Activated B cell treated with CpG ODN at 0.5 μM for 24 hours (primary cell): ENCODE measurements at regions of chr2 and their contacts with region 1.

Region 1: DNA sequence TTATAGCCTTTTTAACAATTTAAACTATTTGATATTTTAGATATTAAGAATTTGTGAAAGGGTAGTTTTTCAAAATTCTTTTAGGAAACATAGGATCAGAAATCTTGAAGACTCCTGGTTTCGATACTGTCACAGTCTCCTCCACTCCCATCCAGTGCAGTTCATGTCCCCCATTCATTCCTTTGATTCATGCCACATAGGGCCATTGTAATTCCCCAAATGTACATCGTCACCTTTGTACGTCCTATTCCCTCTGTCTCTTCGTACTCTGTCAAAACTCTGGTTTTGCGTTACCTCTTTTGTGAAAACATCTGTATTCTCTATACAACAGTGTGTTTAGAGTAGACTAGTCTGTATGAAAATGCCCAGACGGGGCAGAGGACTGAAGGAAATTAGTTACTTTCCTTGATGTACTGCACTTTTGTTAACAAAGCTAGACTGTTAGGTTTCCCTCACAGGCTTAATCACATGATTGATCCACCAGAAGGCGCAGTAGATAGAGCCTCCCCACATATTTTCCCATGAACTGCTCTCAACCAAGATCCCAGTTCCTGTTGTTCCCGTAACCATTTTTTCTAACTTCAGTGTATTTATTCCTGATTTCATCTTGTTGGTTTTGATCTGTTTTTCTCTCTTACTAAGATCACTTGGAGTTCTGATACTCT is 2.5 kb downstream of the MRPL35 start:
- DNase-seq: no peak
- ATAC-seq: no peak
- H3K4me3 Mint-ChIP-seq: no peak overlapping the region
- H3K27ac Mint-ChIP-seq: no peak overlapping the region
- H3K4me1 Mint-ChIP-seq: peaks cover 38% of the 10 kb centered on the region
- H3K27me3 Mint-ChIP-seq: no peaks in the 10 kb centered on the region
- CTCF ChIP-seq: no peak

Region 2: GRCh38 chr2:86038291-86039081 is 163.3 kb before region 1 on chr2:
- CTCF ChIA-PET with region 1: no interaction called
- POLR2A ChIA-PET with region 1: no interaction called
- intact Hi-C with region 1: no loop called
- DNase-seq: no peak
- ATAC-seq: no peak
- H3K4me3 Mint-ChIP-seq: peak overlapping the region; percentile 53
- H3K27ac Mint-ChIP-seq: peak overlapping the region; percentile 97
- H3K4me1 Mint-ChIP-seq: peaks cover 61% of the 10 kb centered on the region
- H3K27me3 Mint-ChIP-seq: no peaks in the 10 kb centered on the region
- CTCF ChIP-seq: no peak

Region 3: DNA sequence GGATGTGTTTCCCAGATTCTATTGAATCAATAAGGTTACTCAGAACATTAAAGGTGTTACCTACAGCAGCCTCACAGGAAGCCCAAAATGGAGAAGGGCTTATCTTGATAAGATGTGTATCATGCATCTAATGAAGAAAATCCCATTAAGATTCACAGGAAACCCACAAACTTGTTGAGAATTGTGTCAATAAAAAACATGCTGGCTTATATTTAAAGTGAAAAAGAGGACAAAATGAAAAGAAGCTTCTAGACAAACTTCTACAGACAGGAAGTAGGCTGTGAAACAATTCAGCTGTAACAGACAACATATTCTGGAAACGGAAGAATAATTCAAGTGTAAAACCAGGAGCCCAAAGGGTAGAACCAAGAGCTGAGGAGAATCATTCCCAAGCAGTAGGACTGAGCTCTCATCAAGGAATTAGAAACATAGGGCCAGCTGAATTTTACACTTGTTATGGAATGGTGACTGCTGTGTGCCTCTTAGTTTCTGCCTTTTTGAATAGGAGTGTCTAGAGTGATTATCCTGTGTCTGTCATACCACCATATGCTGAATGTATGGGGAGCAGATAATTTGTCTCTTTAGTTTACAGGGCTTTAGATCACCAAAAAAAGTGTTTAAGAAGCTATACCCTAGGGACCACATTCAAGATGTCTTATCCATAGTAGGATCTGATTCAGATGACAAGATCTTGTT is 16.1 kb before region 1 on chr2:
- CTCF ChIA-PET with region 1: no interaction called
- POLR2A ChIA-PET with region 1: interaction called, 3 read pairs
- intact Hi-C with region 1: loop called (anchors 2 kb)
- DNase-seq: no peak
- ATAC-seq: peak; percentile 52
- H3K4me3 Mint-ChIP-seq: peak overlapping the region; percentile 32
- H3K27ac Mint-ChIP-seq: peak overlapping the region; percentile 81
- H3K4me1 Mint-ChIP-seq: peaks cover 61% of the 10 kb centered on the region
- H3K27me3 Mint-ChIP-seq: no peaks in the 10 kb centered on the region
- CTCF ChIP-seq: no peak

Region 4: DNA sequence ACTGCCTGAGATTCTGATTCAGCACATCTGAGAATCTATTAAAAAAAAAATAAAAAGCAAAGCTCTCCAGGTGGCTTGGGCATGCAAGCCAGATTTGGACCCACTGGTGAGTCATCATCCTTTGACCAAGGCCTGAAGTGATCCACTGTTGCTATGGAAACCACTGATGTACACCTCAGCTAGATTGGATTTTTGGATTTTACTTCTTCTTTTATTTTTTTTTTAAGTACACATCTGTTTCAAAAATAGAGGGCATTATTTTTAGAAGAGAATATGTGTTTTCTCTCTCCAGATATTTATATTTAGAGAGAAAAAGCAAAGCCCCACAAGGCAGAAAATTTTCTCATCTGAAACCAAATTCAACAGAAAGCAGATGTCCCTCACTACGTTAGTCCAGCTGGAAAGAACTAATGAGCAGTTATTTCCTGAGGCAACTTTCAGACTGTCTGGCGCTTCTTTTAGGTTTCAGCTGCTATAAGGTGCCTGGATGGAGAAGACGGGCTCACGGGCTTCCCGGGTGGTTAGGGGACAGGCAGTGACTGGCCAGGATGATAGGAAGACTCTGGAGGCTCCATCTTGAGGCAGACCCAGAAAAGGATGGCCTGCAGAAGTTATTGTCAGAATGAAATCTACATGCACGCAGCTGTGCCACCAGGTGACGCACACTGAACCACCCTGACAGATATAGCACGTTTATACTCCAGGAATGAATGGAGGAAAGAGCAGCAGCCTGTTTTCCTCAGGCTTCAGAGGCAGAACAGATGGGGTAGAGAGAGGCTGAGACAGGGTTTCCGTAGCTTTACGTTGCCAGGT is 48.0 kb after region 1 on chr2:
- CTCF ChIA-PET with region 1: no interaction called
- POLR2A ChIA-PET with region 1: no interaction called
- intact Hi-C with region 1: no loop called
- DNase-seq: no peak
- ATAC-seq: peak; percentile 28
- H3K4me3 Mint-ChIP-seq: no peak overlapping the region
- H3K27ac Mint-ChIP-seq: peak overlapping the region; percentile 18
- H3K4me1 Mint-ChIP-seq: peaks cover 5% of the 10 kb centered on the region
- H3K27me3 Mint-ChIP-seq: peaks cover 9% of the 10 kb centered on the region
- CTCF ChIP-seq: no peak